ENCODE measurements at regions of chr1 and their contacts with region 1.

Region 1: DNA sequence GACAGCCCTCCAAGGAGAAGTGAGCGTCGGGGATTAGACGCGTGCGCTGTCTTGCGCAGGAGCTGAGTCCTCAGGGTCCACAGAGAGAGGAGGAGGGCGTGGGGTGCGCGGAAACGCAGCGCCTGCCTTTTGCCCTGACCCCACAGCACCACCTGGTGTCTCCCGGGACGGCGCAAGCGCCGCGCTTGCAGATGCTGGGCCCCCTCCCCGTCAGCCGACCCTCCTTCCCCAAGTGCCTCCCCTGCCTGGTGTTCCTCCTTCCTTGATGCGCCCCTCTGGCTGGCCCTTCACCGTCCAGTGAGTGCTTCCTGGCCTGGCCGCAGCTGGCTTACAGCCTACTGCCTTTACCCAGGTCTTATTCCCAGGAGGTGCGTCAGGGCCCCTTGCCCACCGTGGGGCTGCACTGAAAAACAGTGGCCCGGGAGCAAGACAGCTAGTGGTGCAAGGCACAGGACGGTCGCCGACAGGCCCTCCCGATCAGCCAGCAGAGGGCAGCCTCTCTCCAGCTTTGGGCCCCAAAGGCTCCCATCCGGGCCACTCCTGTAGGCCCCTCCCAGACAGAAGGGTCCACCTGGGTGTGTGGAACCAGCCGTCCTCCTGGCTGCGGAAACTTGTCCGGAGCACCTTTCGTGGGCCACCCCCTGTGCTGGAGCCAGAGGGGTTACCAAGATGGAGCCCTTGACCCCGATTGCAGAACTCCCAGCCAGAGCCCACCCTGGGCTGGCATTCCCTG is 12.9 kb upstream of the PHLDA3 start:
- DNase-seq: peak; percentile 71
- H3K4me3 Mint-ChIP-seq: peak overlapping the region; percentile 76
- H3K27ac Mint-ChIP-seq: no peak overlapping the region
- H3K4me1 Mint-ChIP-seq: peaks cover 26% of the 10 kb centered on the region
- H3K27me3 Mint-ChIP-seq: peaks cover 13% of the 10 kb centered on the region

Region 2: GRCh38 chr1:201447911-201448871 is 33.7 kb before region 1 on chr1:
- intact Hi-C with region 1: loop called (anchors 1 kb)
- DNase-seq: peak; percentile 39
- H3K4me3 Mint-ChIP-seq: no peak overlapping the region
- H3K27ac Mint-ChIP-seq: no peak overlapping the region
- H3K4me1 Mint-ChIP-seq: peaks cover 37% of the 10 kb centered on the region
- H3K27me3 Mint-ChIP-seq: peaks cover 10% of the 10 kb centered on the region

Region 3: GRCh38 chr1:201468844-201469511 is 12.9 kb before region 1 on chr1 and contains the start of gene PHLDA3:
- intact Hi-C with region 1: loop called (anchors 1 kb)
- DNase-seq: peak; percentile 70
- H3K4me3 Mint-ChIP-seq: peak within 1 kb of the TSS; percentile 90
- H3K27ac Mint-ChIP-seq: peak within 1 kb of the TSS; percentile 68
- H3K4me1 Mint-ChIP-seq: peaks cover 17% of the 10 kb centered on the region
- H3K27me3 Mint-ChIP-seq: peaks cover 38% of the 10 kb centered on the region
- total RNA-seq, gene PHLDA3: 16.6 and 17.3 TPM in 2 replicates

Region 4: GRCh38 chr1:201513498-201514243 is 31.7 kb after region 1 on chr1:
- intact Hi-C with region 1: loop called (anchors 1 kb)
- DNase-seq: no peak
- H3K4me3 Mint-ChIP-seq: no peak overlapping the region
- H3K27ac Mint-ChIP-seq: no peak overlapping the region
- H3K4me1 Mint-ChIP-seq: peaks cover 15% of the 10 kb centered on the region
- H3K27me3 Mint-ChIP-seq: no peaks in the 10 kb centered on the region

Region 5: DNA sequence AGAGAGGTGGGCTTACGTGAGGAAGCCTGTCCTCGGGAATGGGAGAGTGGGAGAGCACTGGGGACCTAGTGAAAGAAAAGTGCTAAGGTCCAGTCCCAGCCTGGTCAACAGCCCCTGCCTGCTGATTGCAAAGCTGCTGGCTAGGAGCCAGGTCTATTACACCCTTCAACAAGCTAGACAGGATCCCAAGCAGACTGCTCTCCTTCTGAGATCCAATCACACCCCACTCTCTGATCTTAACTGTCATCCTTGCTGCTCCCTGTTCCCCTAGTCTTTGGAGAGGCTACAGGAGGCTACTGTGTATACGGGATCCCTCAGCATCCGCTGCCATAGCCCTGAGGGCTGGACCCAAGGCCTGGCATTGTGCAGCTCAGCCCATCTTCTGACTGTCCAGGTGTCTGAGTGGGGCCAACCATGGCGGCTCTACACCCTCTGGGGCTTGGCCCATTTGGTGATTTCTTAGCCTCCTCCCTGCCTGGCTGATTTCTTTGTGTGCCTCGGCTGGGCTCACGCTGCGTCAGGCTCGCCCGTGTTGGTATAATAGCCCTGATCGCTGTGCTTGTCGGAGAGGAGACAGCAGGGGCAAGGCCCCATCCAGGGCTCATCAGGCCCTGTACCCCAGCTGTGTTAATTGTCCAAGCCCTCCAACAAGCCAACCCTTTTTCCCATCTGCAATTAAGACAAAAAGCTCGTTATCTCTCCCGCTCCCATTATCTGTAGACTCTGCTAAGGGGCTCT is 100.9 kb after region 1 on chr1:
- intact Hi-C with region 1: no loop called
- DNase-seq: no peak
- H3K4me3 Mint-ChIP-seq: no peak overlapping the region
- H3K27ac Mint-ChIP-seq: no peak overlapping the region
- H3K4me1 Mint-ChIP-seq: no peaks in the 10 kb centered on the region
- H3K27me3 Mint-ChIP-seq: peaks cover 13% of the 10 kb centered on the region